Right cardiac atrium (tissue), 5 donors: ENCODE measurements at regions of chr16 and their contacts with region 1.

Region 1: DNA sequence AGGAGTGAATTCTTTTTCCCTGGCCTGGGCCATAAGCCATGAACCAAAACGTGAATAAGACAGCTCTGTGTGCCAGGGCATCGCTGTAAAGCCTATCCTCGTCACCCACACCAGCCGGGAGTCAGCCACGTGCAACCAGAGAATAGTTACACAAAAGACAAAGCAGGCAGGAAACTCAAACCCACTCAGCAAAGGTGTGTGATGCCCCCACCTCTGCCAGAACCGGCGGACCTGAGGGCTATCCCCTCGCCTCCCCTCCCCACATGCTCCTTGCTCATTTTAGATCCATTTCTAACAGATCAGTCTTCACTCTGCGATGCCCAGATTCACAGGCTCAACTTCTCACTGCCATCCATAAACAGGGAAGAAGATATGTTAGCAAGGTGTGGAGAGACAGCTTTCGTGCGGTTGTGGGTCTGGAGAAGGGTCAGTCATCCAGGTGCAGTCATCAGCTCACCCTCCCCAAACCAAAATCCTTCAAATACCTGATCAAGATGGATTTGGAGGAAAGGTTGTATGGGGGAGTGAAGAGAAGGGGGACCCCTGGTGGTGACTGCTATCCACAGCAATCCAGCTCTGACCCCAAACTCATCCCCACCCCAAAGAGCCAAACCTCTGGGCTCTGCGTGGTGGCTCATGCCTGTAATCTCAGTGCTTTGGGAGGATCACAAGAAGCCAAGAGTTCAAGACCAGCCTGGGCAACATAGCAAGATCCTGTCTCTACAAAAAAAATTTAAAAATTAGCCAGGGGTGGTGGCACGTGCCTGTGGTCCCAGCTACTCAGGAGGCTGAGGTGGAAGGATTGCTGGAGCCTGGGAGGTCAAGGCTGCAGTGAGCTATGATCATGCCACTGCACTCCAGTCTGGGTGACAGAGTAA is 219.2 kb downstream of the C16orf78 start:
- DNase-seq: no peak
- ATAC-seq: peak in 1 of 2 donors; percentile 51
- H3K4me3 ChIP-seq: no peak overlapping the region
- H3K27ac ChIP-seq: no peak overlapping the region
- H3K4me1 ChIP-seq: peaks cover 2% of the 10 kb centered on the region
- H3K27me3 ChIP-seq: no peaks in the 10 kb centered on the region

Region 2: DNA sequence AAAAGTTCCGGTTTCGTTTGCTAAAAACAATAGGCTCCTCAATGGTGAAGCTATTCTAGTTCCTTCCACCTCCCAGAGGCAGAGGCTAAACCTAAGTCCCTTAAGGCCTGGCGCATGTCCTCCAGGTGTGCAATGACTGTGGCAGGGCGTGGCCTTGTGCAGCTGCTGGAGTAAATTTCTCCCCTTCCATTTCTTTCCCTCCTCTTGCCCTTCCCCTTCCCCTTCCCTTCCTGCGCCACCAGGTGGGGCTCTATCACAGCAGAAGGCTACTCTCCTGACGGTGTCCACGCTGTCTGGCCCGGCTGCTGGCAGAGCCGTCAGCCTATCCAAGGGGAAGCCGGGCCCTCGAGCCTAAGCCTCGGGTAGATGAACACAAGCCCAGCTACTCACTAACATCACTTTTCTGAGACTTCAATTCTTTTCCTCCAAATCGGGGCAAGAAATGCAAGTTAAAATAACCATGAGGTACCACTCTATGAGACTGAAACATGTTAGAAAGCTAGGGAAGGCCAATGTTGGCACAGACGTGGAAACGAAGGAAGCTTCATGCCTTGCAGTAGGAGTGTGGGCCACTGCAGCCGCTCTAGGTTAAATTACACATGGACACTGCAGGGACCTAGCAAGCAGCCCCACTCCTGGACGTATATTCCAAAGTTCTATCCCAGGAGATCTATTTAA is 184.8 kb before region 1 on chr16:
- intact Hi-C with region 1: loop called in 3 of 4 experiments (anchors 5 kb)
- DNase-seq: peak; percentile 88 to 95 (median 94)
- ATAC-seq: peak; percentile 97 to 98
- H3K4me3 ChIP-seq: no peak overlapping the region
- H3K27ac ChIP-seq: no peak overlapping the region
- H3K4me1 ChIP-seq: no peaks in the 10 kb centered on the region
- H3K27me3 ChIP-seq: no peaks in the 10 kb centered on the region